ENCODE measurements at regions of chr12 and their contacts with region 1.

Region 1: GRCh38 chr12:70692681-70693288 is 55.6 kb upstream of the PTPRB start:
- DNase-seq: no peak
- ATAC-seq: no peak

Region 2: DNA sequence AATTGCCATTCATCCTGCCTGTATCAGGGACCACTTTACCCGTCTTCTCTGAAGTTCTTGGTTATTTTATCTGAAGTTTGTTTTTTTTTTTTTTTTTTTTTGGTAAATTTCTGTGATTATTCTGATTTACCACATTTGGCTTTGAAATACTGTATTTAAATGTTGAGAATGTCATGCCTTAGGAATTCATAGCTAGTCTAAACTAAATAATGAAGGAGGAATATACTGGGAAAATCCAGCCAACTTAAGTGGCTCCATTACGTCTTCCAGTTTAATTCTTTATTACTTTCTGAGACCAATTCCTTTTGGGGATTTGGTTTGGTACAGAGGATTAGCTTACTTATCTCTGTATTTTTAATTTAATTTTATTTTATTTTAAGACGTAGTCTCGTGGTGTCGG is 387.0 kb before region 1 on chr12:
- intact Hi-C with region 1: no loop called
- DNase-seq: no peak
- ATAC-seq: no peak

Region 3: GRCh38 chr12:70590051-70590450 is 102.7 kb before region 1 on chr12:
- intact Hi-C with region 1: loop called in 1 of 2 experiments (anchors 10 kb)
- DNase-seq: peak; percentile 49 to 82
- ATAC-seq: peak; percentile 84

Region 4: DNA sequence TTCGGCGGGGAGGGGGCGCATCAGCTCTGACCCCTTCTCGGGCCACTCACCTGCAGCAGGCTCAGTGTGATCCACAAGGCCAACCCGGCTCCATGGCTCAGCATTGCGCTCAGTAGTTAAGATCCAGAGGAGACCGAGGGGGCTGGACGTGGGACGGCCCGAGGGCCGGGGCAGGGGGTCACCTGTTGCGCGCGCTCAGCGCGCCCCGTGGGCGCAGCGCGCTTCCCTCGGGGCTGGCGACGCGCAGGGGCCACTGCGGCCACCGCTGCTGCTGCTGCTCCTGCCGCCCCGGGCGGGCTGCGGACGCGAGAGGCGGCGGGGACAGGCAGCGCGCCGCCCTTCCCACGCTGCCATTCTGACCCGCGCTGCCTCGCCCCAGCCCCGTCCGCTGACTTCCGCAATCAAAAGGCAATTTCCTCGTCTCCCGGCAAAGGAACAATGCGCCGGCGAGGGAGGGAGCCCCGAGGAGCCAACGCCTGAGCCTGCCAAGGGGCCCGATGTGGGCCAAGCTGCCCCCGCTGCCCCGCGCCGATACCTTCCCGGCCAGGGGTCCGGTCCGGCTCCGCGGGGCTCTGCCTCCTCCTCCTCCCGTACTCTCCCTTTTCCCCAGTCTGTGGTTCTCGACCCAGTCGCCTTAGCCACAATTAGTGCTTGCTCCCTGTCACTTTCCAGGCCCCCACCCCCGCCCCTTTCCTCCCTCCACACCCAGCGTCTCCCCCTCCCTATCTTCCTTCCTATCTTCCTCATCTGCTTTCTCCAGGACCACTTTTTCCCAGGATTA is 82.9 kb before region 1 on chr12:
- intact Hi-C with region 1: no loop called
- DNase-seq: peak; percentile 63 to 80
- ATAC-seq: peak; percentile 92

Region 5: DNA sequence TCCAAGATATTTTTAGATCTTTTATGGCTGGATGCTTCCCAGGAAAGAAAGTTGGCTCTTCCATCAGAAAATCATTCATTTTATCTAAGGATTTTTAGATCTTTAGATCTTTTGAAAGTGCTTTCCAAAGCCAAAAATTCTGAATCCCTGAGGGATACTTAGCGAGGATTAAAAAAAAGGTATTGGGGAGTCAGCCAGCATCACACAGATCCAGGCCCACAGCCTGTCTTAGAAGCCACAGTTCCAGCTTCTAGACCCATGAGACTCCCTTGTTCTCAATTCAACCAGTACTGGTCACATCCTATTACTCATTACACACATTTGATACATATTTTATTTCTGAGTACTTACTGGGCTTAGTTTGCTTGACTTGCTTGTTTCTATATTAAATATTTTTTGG is 415.2 kb after region 1 on chr12:
- intact Hi-C with region 1: no loop called
- DNase-seq: no peak
- ATAC-seq: no peak

Region 6: GRCh38 chr12:71250166-71250565 is 557.4 kb after region 1 on chr12:
- intact Hi-C with region 1: no loop called
- DNase-seq: no peak
- ATAC-seq: no peak